MCF 10A (cell line): ENCODE measurements at regions of chr7 and their contacts with region 1.

Region 1: GRCh38 chr7:28020302-28020940 is 160.2 kb downstream of the JAZF1 start:
- DNase-seq: peak; percentile 85
- H3K4me3 Mint-ChIP-seq: no peak overlapping the region
- H3K27ac Mint-ChIP-seq: no peak overlapping the region
- H3K4me1 Mint-ChIP-seq: no peaks in the 10 kb centered on the region
- H3K27me3 Mint-ChIP-seq: no peaks in the 10 kb centered on the region
- CTCF ChIP-seq: peak; percentile 84

Region 2: GRCh38 chr7:27196287-27196767 is 824.1 kb before region 1 on chr7:
- CTCF ChIA-PET with region 1: interaction called, 21 read pairs
- POLR2A ChIA-PET with region 1: interaction called, 4 read pairs
- intact Hi-C with region 1: loop called (anchors 1 kb)
- DNase-seq: peak; percentile 74
- H3K4me3 Mint-ChIP-seq: no peak overlapping the region
- H3K27ac Mint-ChIP-seq: no peak overlapping the region
- H3K4me1 Mint-ChIP-seq: no peaks in the 10 kb centered on the region
- H3K27me3 Mint-ChIP-seq: peaks cover 55% of the 10 kb centered on the region
- CTCF ChIP-seq: peak; percentile 83

Region 3: DNA sequence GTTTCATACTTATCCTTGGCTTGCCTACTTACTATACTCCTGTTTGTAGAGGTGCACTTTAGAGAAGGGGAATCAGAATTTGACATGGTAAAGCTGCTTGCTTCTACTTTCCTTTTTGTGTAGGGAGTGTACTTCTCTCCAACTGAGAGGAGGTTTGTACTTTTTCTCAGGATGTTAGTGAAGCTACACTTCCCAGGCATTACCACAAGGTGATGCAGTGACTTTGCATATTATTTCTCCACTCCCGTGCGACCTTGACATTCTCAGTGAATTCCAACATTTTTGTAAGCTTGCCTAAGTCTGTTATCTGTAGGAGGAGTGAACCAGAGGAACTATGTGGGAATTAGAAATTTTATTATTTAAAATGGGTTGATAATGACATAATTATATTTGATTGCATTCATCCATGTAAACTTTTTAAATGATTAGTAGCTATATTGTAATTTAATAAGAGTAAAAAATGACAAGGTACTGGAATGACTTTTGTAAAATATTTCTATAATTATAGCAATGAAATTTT is 275.3 kb before region 1 on chr7:
- CTCF ChIA-PET with region 1: interaction called, 3 read pairs
- POLR2A ChIA-PET with region 1: interaction called, 4 read pairs
- intact Hi-C with region 1: loop called (anchors 1 kb)
- DNase-seq: peak; percentile 62
- H3K4me3 Mint-ChIP-seq: no peak overlapping the region
- H3K27ac Mint-ChIP-seq: peak overlapping the region; percentile 77
- H3K4me1 Mint-ChIP-seq: peaks cover 32% of the 10 kb centered on the region
- H3K27me3 Mint-ChIP-seq: no peaks in the 10 kb centered on the region
- CTCF ChIP-seq: peak; percentile 63

Region 4: DNA sequence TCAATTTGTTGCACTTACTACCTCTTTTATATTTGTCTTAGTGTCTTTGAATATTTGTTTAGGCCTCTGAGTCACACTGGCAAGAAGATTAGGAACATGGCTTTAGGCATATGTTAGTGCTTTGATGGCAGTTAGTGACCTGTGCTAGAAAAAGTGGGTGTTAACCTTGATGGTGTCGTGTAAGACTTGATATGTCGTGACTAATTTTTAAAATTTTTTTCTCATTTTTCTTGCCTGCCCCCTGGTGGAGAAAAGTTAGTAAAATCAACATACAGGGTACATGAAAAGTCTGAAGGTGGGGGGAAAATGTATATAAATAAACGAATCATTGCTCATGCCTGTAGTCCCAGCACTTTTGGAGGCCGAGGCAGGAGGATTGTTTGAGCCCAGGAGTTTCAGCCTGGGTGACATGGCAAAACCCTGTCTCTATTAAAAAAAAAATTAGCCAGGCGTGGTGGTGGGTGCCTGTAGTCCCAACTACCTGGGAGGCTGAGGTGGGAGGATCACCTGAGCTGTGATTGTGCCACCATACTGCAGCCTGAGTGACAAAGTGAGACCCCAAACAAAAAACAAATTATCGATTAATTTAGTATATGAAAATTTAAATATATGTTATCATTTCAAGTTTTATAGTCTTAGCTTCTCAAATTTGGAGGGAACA is 235.9 kb before region 1 on chr7:
- CTCF ChIA-PET with region 1: interaction called, 10 read pairs
- POLR2A ChIA-PET with region 1: no interaction called
- intact Hi-C with region 1: loop called (anchors 5 kb)
- DNase-seq: peak; percentile 67
- H3K4me3 Mint-ChIP-seq: no peak overlapping the region
- H3K27ac Mint-ChIP-seq: peak overlapping the region; percentile 59
- H3K4me1 Mint-ChIP-seq: peaks cover 13% of the 10 kb centered on the region
- H3K27me3 Mint-ChIP-seq: no peaks in the 10 kb centered on the region
- CTCF ChIP-seq: peak; percentile 45

Region 5: GRCh38 chr7:28002638-28003037 is 17.8 kb before region 1 on chr7:
- CTCF ChIA-PET with region 1: interaction called, 18 read pairs
- POLR2A ChIA-PET with region 1: interaction called, 3 read pairs
- intact Hi-C with region 1: no loop called
- DNase-seq: no peak
- H3K4me3 Mint-ChIP-seq: no peak overlapping the region
- H3K27ac Mint-ChIP-seq: no peak overlapping the region
- H3K4me1 Mint-ChIP-seq: peaks cover 5% of the 10 kb centered on the region
- H3K27me3 Mint-ChIP-seq: no peaks in the 10 kb centered on the region
- CTCF ChIP-seq: no peak

Region 6: DNA sequence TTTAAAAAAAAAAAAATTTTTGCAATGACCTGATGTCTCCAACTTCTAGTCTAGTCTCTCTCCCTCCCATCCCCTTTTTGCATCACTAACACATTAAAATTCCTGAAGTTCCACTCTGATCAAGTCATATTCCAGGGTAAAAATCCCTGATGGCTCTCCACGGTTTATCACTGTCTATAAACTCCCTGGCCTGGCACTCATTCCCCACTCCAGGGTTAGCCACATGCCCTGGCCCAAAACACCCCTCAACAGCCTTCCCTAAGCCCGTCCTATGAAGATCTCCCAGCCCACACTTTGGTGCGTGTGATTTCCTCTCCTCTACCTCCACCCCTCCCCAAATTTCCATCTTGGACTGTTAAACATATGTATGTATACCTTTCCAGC is 34.7 kb after region 1 on chr7:
- CTCF ChIA-PET with region 1: interaction called, 14 read pairs
- POLR2A ChIA-PET with region 1: no interaction called
- intact Hi-C with region 1: no loop called
- DNase-seq: no peak
- H3K4me3 Mint-ChIP-seq: no peak overlapping the region
- H3K27ac Mint-ChIP-seq: no peak overlapping the region
- H3K4me1 Mint-ChIP-seq: peaks cover 11% of the 10 kb centered on the region
- H3K27me3 Mint-ChIP-seq: no peaks in the 10 kb centered on the region
- CTCF ChIP-seq: no peak

Region 7: DNA sequence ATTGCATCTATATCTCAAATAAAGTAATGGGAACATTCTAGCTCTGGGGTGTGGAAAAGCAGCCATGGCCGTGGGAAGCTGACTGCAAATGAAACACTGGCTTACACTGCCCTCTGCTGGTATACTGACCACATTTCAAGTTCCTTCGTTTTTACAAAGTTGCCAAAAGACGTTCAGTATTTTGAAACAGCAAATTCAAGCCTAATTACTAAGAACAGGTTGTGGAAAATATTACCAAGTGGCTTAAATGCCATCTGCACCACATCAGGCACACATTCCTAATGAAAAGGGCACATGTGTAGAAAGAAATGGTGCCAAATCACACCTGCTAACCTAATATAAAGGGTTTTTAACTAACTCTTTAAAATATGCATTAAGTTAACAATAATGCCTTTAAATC is 76.3 kb after region 1 on chr7:
- CTCF ChIA-PET with region 1: interaction called, 20 read pairs
- POLR2A ChIA-PET with region 1: interaction called, 7 read pairs
- intact Hi-C with region 1: loop called (anchors 1 kb)
- DNase-seq: peak; percentile 69
- H3K4me3 Mint-ChIP-seq: no peak overlapping the region
- H3K27ac Mint-ChIP-seq: no peak overlapping the region
- H3K4me1 Mint-ChIP-seq: no peaks in the 10 kb centered on the region
- H3K27me3 Mint-ChIP-seq: no peaks in the 10 kb centered on the region
- CTCF ChIP-seq: peak; percentile 70